ENCODE measurements at regions of chr4 and their contacts with region 1.

Region 1: GRCh38 chr4:84258905-84259830 is 239.9 kb downstream of the NKX6-1 start:
- ATAC-seq: peak in 3 of 8 experiments; percentile 35 to 45 (median 39)
- H3K4me3 ChIP-seq: no peak overlapping the region
- H3K27ac ChIP-seq: no peak overlapping the region
- H3K4me1 ChIP-seq: no peaks in the 10 kb centered on the region

Region 2: DNA sequence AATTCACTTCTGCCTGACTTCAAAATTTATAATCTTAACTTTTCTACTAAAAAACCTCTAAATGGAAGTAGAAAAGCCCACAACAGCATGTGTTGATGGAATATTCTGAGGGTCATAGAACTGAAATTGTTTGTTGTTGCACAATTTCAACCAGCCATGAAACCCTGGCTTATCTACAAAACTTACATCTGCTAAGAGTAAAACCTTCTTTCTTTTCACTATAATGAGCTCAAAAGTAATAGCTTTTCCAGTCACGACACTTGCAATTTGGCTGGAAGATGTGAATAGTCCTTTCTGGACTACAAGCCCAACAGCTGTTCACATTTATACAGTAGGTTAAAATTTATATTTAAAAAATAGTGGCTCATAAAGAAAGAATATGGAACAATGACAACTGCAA is 473.3 kb before region 1 on chr4:
- in situ Hi-C with region 1: no loop called
- ATAC-seq: no peak
- H3K4me3 ChIP-seq: no peak overlapping the region
- H3K27ac ChIP-seq: no peak overlapping the region
- H3K4me1 ChIP-seq: peaks cover 4 to 6% of the 10 kb centered on the region in 2 donors

Region 3: GRCh38 chr4:83905952-83906351 is 353.2 kb before region 1 on chr4:
- in situ Hi-C with region 1: loop called in 1 of 9 experiments (anchors 25 kb)
- ATAC-seq: peak in 3 of 8 experiments; percentile 62 to 90 (median 62)
- H3K4me3 ChIP-seq: no peak overlapping the region
- H3K27ac ChIP-seq: no peak overlapping the region
- H3K4me1 ChIP-seq: no peaks in the 10 kb centered on the region